ENCODE measurements at regions of chr3 and their contacts with region 1.

Region 1: DNA sequence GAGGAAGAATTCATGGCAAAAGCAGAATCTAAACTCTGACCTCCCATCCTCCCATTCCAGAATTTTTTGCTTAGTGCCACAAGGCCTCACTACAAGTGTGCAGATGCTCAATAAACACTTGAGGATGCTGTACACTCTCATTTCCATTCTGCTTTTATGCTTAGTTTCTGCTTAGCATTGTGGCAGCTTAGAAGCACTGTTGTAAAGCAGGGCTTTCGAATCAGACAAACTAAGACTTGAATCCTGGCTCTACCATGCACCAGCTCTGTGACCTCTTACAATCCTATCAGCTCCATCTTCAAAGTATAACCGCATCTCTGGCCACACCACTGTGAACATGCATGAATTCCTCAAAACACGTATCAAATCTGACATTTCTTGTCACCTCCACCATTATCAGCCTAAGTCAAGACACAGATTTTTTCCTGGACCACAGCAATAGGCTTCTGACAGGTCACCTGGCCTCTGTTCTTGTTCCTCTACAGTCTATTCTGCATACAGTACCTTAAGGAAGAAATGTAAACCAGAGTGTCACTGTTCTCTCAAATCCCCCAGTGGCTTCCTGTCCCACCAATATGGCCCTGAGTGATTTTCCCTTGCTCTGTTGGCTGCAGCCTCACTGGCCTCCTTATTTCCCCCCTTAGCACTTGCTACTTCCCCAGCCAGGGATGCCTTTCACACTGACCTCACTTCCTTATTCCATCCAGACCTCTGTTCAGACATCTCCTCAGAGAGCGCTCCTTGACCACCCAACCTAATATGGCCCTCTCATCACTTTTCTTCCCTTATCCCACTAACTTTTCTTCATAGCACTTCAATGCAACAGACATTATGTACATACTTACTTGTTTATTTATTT is 8.1 kb upstream of the PHC3 start:
- DNase-seq: no peak
- ATAC-seq: peak; percentile 28
- H3K4me3 ChIP-seq: no peak overlapping the region
- H3K4me3 Mint-ChIP-seq: peak overlapping the region in 5 of 10 donors; percentile 10 to 37 (median 23)
- H3K27ac ChIP-seq: no peak overlapping the region
- H3K27ac Mint-ChIP-seq: peak overlapping the region in 2 of 9 donors; percentile 14 to 51
- H3K4me1 ChIP-seq: peaks cover 0 to 4% of the 10 kb centered on the region in 2 donors
- H3K4me1 Mint-ChIP-seq: peaks cover 0 to 14% (median 12%) of the 10 kb centered on the region in 7 donors
- H3K27me3 ChIP-seq: no peaks in the 10 kb centered on the region
- H3K27me3 Mint-ChIP-seq: peaks cover 0 to 21% (median 4%) of the 10 kb centered on the region in 5 donors

Region 2: GRCh38 chr3:169764452-169765274 is 425.0 kb before region 1 on chr3 and contains the start of gene TERC:
- CTCF ChIA-PET with region 1: no interaction called
- POLR2A ChIA-PET with region 1: no interaction called
- intact Hi-C with region 1: no loop called
- DNase-seq: peak; percentile 72 to 96 (median 94)
- ATAC-seq: peak; percentile 91
- H3K4me3 ChIP-seq: peak within 1 kb of the TSS; percentile 88
- H3K4me3 Mint-ChIP-seq: peak within 1 kb of the TSS; percentile 89 to 99 (median 98)
- H3K27ac ChIP-seq: peak within 1 kb of the TSS; percentile 98
- H3K27ac Mint-ChIP-seq: peak within 1 kb of the TSS; percentile 96 to 100 (median 99)
- H3K4me1 ChIP-seq: peaks cover 11 to 18% of the 10 kb centered on the region in 2 donors
- H3K4me1 Mint-ChIP-seq: peaks cover 6 to 39% (median 33%) of the 10 kb centered on the region in 7 donors
- H3K27me3 ChIP-seq: no peaks in the 10 kb centered on the region
- H3K27me3 Mint-ChIP-seq: no peaks in the 10 kb centered on the region
- total RNA-seq, gene TERC: 4.0 to 19.4 (median 7.4) TPM

Region 3: GRCh38 chr3:170277833-170278580 is 88.4 kb after region 1 on chr3:
- CTCF ChIA-PET with region 1: no interaction called
- POLR2A ChIA-PET with region 1: no interaction called
- intact Hi-C with region 1: loop called in 1 of 2 experiments (anchors 5 kb)
- DNase-seq: peak in 6 of 9 donors; percentile 5 to 40 (median 22)
- ATAC-seq: peak; percentile 38
- H3K4me3 ChIP-seq: peak overlapping the region; percentile 39
- H3K4me3 Mint-ChIP-seq: peak overlapping the region; percentile 69 to 94 (median 81)
- H3K27ac ChIP-seq: no peak overlapping the region
- H3K27ac Mint-ChIP-seq: peak overlapping the region; percentile 41 to 94 (median 76)
- H3K4me1 ChIP-seq: peaks cover 5 to 6% of the 10 kb centered on the region in 2 donors
- H3K4me1 Mint-ChIP-seq: peaks cover 15 to 32% (median 23%) of the 10 kb centered on the region in 7 donors
- H3K27me3 ChIP-seq: no peaks in the 10 kb centered on the region
- H3K27me3 Mint-ChIP-seq: no peaks in the 10 kb centered on the region

Region 4: DNA sequence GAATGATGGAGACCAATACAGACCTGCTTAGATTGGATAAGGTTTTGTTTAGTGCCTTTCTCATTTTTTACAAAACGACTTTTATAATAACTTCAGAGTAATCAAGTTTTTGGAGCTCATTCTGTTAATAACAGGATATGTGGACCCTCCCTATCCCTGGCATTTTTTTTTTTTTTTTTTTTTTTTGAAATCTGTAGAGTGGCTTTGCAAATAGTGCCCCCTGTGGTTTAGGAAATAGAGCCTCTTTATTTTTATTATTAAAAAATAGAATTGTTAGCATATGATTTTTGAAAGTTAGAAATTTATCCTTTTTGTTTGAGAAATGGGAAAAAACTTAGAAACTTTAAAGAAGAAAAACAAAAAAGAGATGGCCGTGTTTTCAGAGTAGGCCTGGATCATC is 179.3 kb after region 1 on chr3:
- CTCF ChIA-PET with region 1: no interaction called
- POLR2A ChIA-PET with region 1: interaction called, 3 read pairs
- intact Hi-C with region 1: loop called in 1 of 2 experiments (anchors 1 kb)
- DNase-seq: no peak
- ATAC-seq: peak; percentile 27
- H3K4me3 ChIP-seq: no peak overlapping the region
- H3K4me3 Mint-ChIP-seq: no peak overlapping the region
- H3K27ac ChIP-seq: no peak overlapping the region
- H3K27ac Mint-ChIP-seq: no peak overlapping the region
- H3K4me1 ChIP-seq: peaks cover 0 to 6% of the 10 kb centered on the region in 2 donors
- H3K4me1 Mint-ChIP-seq: peaks cover 9 to 59% (median 47%) of the 10 kb centered on the region in 7 donors
- H3K27me3 ChIP-seq: no peaks in the 10 kb centered on the region
- H3K27me3 Mint-ChIP-seq: no peaks in the 10 kb centered on the region

Region 5: GRCh38 chr3:170811928-170812591 is 622.4 kb after region 1 on chr3:
- CTCF ChIA-PET with region 1: interaction called, 3 read pairs
- POLR2A ChIA-PET with region 1: no interaction called
- intact Hi-C with region 1: loop called in 1 of 2 experiments (anchors 1 kb)
- DNase-seq: peak; percentile 17 to 77 (median 68)
- ATAC-seq: peak; percentile 92
- H3K4me3 ChIP-seq: no peak overlapping the region
- H3K4me3 Mint-ChIP-seq: no peak overlapping the region
- H3K27ac ChIP-seq: no peak overlapping the region
- H3K27ac Mint-ChIP-seq: no peak overlapping the region
- H3K4me1 ChIP-seq: no peaks in the 10 kb centered on the region
- H3K4me1 Mint-ChIP-seq: peaks cover 0 to 8% (median 0%) of the 10 kb centered on the region in 7 donors
- H3K27me3 ChIP-seq: no peaks in the 10 kb centered on the region
- H3K27me3 Mint-ChIP-seq: peaks cover 0 to 6% (median 0%) of the 10 kb centered on the region in 5 donors